AG04450 (cell line): ENCODE measurements at regions of chr19 and their contacts with region 1.

Region 1: DNA sequence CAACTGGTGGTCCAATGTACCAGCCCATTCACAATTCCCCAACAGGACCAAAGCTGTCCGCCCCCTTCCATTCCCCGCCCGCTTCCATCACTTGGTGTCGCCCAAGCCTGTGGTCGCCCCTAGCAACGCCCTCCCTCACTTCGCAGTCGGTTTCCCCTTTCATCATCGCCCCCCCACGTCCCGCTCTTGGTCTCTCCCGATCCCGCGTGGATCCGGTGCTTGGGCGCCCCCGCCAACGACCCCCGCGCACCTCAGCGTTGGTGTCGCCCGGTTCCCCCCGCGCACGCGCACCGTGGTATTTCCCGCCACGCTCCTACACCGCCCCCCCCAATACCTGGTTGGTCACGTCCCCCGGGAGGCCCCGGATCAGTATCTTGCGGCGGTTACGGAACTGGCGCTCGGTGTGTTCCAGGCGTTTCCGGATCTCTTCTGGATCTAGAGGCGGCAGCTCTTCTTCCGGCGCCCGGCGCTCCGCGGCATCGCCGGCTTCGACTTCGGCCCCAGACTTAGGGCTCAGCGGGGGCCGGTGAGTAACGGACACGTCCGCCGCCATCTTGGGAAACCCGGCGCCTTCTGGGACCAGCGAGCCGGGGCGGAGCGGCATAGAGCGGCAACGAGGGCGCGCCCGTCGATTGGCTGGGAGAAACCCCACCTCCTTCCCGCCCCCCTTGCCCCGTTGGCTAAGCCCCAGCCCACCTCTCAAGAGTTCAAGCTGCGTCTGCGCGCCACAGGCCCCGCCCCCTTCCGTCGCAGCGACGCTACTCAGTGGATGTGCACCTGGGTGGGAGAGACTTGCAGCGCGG is at the start of gene RAVER1:
- DNase-seq: peak; percentile 94
- H3K4me3 ChIP-seq: peak within 1 kb of the TSS; percentile 89
- H3K27ac ChIP-seq: peak within 1 kb of the TSS; percentile 96
- H3K27me3 ChIP-seq: no peaks in the 10 kb centered on the region
- CTCF ChIP-seq: peak; percentile 10; the same call in 1 of the 2 replicates
- polyA plus RNA-seq, gene RAVER1: 2.2 and 4.1 TPM in 2 replicates

Region 2: DNA sequence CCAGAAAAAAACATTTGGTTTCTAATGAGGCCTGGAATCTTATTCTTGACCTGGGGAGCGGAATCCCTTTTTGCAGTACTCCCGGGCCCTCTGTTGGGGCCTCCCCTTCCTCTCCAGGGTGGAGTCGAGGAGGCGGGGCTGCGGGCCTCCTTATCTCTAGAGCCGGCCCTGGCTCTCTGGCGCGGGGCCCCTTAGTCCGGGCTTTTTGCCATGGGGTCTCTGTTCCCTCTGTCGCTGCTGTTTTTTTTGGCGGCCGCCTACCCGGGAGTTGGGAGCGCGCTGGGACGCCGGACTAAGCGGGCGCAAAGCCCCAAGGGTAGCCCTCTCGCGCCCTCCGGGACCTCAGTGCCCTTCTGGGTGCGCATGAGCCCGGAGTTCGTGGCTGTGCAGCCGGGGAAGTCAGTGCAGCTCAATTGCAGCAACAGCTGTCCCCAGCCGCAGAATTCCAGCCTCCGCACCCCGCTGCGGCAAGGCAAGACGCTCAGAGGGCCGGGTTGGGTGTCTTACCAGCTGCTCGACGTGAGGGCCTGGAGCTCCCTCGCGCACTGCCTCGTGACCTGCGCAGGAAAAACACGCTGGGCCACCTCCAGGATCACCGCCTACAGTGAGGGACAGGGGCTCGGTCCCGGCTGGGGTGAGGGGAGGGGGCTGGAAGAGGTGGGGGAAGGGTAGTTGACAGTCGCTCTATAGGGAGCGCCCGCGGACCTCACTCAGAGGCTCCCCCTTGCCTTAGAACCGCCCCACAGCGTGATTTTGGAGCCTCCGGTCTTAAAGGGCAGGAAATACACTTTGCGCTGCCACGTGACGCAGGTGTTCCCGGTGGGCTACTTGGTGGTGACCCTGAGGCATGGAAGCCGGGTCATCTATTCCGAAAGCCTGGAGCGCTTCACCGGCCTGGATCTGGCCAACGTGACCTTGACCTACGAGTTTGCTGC is 46.1 kb before region 1 on chr19 and contains the start of gene ICAM4:
- CTCF ChIA-PET with region 1: no interaction called
- POLR2A ChIA-PET with region 1: interaction called, 25 read pairs
- DNase-seq: no peak
- H3K4me3 ChIP-seq: peak within 1 kb of the TSS; percentile 7; the same call in 1 of the 2 replicates
- H3K27ac ChIP-seq: peak within 1 kb of the TSS; percentile 21
- H3K27me3 ChIP-seq: no peaks in the 10 kb centered on the region
- CTCF ChIP-seq: no peak
- polyA plus RNA-seq, gene ICAM4: 2.5 and 3.3 TPM in 2 replicates

Region 3: GRCh38 chr19:10292206-10292788 is 40.9 kb before region 1 on chr19:
- CTCF ChIA-PET with region 1: no interaction called
- POLR2A ChIA-PET with region 1: interaction called, 25 read pairs
- DNase-seq: no peak
- H3K4me3 ChIP-seq: peak overlapping the region; percentile 63
- H3K27ac ChIP-seq: no peak overlapping the region
- H3K27me3 ChIP-seq: peaks cover 8% of the 10 kb centered on the region
- CTCF ChIP-seq: no peak

Region 4: GRCh38 chr19:10361569-10362011 is 28.4 kb after region 1 on chr19:
- CTCF ChIA-PET with region 1: no interaction called
- POLR2A ChIA-PET with region 1: no interaction called
- DNase-seq: no peak
- H3K4me3 ChIP-seq: no peak overlapping the region
- H3K27ac ChIP-seq: no peak overlapping the region
- H3K27me3 ChIP-seq: no peaks in the 10 kb centered on the region
- CTCF ChIP-seq: no peak

Region 5: GRCh38 chr19:10380313-10381102 is 47.4 kb after region 1 on chr19 and contains the start of gene TYK2:
- CTCF ChIA-PET with region 1: no interaction called
- POLR2A ChIA-PET with region 1: interaction called, 13 read pairs
- DNase-seq: peak; percentile 97
- H3K4me3 ChIP-seq: peak within 1 kb of the TSS; percentile 95
- H3K27ac ChIP-seq: peak within 1 kb of the TSS; percentile 57
- H3K27me3 ChIP-seq: no peaks in the 10 kb centered on the region
- CTCF ChIP-seq: no peak
- polyA plus RNA-seq, gene TYK2: 29.1 and 52.8 TPM in 2 replicates